Left colon (tissue), 2 donors: ENCODE measurements at regions of chr7 and their contacts with region 1.

Region 1: DNA sequence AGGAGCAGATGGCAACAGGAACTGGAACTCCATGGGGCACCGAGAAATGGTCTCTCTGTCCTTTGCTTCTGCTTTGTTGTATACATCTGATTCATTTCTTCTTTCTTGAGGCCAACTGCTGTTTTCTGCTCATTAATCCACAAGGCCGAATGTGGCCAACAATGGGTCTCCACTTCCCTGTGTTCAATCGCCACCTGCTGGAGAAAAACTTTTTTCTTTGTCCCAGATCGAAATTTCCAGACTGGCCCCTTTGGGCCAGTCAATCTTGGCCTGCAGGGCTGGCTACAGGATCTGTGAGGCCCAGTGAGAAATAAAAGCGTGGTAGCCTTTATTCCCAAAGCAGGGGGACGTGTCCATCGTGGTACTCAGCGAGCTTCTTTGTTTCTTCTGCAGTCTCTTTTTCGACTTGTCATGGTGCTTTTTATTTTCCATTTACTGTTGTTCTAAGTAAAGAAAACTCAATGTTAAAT is 58.8 kb downstream of the PARP12 start:
- DNase-seq: peak in 1 of 2 donors; percentile 23
- ATAC-seq: peak; percentile 47

Region 2: DNA sequence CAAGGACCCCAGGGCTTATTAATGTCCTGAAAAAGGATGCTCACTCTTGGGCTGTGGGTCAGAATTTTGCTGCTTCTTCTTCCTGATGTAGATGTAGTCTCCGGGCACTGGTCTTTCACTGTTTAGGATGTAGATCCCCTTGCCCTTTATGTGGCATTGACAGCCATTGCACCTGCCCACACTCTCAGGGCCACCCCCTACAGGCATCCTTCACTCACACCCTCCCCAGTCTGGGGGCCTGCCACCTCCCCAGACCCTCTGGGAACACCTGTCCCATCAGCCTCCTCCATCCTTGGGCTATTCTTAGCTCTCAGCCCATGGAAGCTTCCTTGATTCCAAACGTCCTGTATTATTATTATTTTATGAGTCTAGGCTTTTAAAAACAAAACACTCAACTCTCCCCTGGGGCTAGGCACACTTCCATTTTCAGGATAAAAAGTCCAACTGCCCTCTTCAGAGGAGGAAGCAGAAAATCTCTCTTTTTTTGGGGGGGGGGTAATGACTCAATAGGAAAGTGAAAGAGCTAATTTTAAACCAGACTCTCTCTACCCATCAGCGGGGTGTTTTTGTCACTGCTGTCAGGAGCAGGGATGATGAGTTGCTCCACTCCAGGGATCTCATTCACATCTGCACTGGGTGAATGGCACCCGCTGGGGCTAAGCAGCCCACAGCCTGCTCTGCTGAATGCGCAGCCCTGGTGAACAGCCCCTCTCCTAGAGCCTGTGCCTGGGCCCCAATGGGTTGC is 508.9 kb before region 1 on chr7:
- intact Hi-C with region 1: loop called in 1 of 2 experiments (anchors 5 kb)
- DNase-seq: no peak
- ATAC-seq: no peak

Region 3: DNA sequence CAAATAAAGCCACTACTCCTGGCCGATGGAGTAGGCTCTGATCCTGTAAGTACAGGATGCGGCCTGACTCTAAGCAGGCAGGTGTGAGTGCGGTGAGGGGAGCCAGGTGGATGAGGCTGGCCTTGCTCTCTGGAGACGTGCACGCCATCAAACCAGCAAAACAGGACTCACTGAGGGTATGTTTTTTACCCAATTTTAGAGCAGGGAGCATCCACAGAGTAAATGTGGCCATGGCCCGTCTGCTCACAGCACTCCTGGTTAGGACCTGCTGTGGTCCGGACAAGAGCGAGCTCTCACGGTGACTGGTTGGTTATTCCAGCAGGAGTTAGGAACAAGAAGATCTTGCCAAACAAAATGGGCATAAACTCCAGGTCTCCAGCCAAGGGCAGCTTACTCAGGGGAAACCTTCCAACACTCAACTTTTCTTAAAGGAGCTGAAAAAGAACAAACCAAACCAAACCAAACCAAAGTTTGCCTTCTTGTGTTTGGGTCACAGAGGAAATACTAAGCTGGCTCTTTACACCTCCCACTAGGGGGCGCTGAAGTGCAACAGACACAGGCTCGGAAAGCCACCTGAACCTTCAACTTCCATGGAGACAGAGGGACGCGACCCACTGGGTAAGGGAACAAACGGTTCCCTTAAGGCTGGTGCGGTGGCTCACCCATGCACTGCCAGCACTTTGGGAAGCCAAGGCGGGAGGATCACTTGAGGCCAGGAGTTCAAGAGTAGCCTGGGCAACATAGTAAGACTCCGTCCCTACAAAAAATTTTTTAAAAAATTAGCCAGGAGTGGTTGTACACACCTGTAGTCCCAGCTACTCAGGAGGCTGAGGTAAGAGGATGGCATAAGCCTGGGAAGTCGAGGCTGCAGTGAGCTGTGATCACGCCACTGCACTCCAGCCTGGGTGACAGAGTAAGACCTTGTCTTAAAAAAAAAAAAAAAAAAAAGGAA is 358.1 kb before region 1 on chr7:
- intact Hi-C with region 1: loop called (anchors 2 to 10 kb)
- DNase-seq: peak; percentile 71 to 84
- ATAC-seq: peak; percentile 78

Region 4: GRCh38 chr7:139777948-139778841 is 225.8 kb before region 1 on chr7 and contains the start of gene HIPK2:
- intact Hi-C with region 1: loop called in 1 of 2 experiments (anchors 10 kb)
- DNase-seq: peak; percentile 76 to 85
- ATAC-seq: peak; percentile 82
- total RNA-seq, gene HIPK2: 36.4 to 37.8 TPM

Region 5: GRCh38 chr7:140121326-140121725 is 117.4 kb after region 1 on chr7:
- intact Hi-C with region 1: no loop called
- DNase-seq: no peak
- ATAC-seq: no peak